ENCODE measurements at regions of chr3 and their contacts with region 1.

Region 1: GRCh38 chr3:102229062-102229655 is 205.7 kb upstream of the ZPLD1 start:
- DNase-seq: peak; percentile 28
- CTCF ChIP-seq: peak; percentile 92

Region 2: DNA sequence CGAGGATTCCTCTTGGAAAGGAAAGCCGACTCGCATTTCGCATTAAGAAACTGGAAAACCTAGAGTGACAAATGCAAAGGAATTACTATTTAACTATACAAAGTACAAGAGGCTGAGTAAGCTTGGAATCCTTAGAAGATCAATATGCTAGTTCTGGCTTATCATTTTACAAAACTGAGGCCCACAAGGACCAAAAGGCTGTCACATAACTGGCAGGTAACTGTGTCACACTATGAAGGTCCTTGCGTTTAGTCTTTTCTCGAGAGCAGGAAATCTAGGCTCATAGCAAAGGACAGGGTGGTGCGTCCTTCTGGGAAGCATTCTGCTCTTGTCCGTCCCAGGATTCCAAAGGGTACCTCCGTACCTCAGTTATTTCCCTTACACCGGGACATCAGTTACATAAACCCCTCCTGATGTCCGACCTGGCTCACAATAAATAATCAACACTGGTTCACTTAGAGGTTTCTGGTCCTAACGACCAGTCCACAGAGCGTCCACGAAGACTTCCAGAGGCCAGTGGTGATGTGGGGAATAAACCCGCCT is 543.2 kb before region 1 on chr3:
- in situ Hi-C with region 1: loop called (anchors 10 kb)
- DNase-seq: no peak
- CTCF ChIP-seq: no peak

Region 3: GRCh38 chr3:101809178-101810021 is 419.8 kb before region 1 on chr3:
- in situ Hi-C with region 1: loop called (anchors 5 kb)
- DNase-seq: peak; percentile 43
- CTCF ChIP-seq: peak; percentile 65

Region 4: GRCh38 chr3:102053375-102053989 is 175.7 kb before region 1 on chr3:
- in situ Hi-C with region 1: no loop called
- DNase-seq: peak; percentile 24
- CTCF ChIP-seq: no peak

Measured in GM13977 (cell line).